K562 (cell line): ENCODE measurements at regions of chr15 and their contacts with region 1.

Region 1: DNA sequence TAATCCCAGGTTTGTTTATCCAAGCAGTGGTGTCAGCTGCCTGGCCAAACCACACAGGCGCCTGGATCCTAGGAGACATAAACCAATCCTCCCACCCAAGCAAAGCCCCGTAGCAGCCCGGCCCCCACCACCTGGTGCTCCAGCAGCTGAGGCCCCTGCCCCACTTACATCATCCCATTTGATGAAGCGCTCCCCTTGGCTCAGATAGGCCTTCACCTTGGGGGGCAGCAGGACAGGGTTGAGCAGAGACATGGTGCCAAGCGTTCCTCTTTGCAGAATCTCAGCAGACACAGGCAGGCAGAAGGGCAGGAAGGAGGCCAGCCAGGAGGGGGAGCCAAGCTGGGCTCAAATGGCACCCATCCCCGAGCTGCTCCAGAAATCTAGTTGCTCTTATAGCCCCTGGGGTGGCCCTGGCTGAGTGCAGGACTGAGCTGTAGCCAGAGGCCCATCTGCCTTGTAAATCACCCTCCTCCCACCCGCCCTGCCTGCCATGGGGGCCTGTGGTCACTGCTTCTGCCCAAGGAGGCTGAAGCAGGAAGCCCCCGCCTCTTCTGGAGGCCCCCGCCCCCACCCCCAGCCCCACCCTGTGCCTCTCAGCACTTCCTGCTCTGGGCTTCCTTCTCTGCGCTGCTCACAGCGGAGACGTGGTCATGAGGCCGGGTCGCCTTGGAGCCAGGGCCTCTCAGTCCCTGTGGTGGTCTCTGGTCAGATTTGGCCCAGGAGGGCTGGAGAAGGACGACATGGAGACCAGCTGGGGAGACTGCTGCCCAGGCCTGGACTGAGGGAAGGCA is at the start of gene PLCB2:
- DNase-seq: peak; percentile 46 to 55 (median 52)
- ATAC-seq: peak; percentile 69
- H3K4me3 ChIP-seq: no peak within 1 kb of the TSS
- H3K27ac ChIP-seq: peak within 1 kb of the TSS; percentile 66
- H3K4me1 ChIP-seq: peaks cover 22 to 36% of the 10 kb centered on the region in 2 experiments
- H3K27me3 ChIP-seq: peaks cover 0 to 13% of the 10 kb centered on the region in 2 experiments; a peak in 2 of 5 replicates
- CTCF ChIP-seq: peak; percentile 39 to 52 (median 40); a peak in 5 of 6 replicates
- EP300 ChIP-seq: no peak
- POLR2A ChIP-seq: no peak
- RAD21 ChIP-seq: peak in 1 of 2 experiments; percentile 6; a peak in 1 of 4 replicates
- polyA plus RNA-seq, gene PLCB2: 0.37 to 0.59 TPM

Region 2: DNA sequence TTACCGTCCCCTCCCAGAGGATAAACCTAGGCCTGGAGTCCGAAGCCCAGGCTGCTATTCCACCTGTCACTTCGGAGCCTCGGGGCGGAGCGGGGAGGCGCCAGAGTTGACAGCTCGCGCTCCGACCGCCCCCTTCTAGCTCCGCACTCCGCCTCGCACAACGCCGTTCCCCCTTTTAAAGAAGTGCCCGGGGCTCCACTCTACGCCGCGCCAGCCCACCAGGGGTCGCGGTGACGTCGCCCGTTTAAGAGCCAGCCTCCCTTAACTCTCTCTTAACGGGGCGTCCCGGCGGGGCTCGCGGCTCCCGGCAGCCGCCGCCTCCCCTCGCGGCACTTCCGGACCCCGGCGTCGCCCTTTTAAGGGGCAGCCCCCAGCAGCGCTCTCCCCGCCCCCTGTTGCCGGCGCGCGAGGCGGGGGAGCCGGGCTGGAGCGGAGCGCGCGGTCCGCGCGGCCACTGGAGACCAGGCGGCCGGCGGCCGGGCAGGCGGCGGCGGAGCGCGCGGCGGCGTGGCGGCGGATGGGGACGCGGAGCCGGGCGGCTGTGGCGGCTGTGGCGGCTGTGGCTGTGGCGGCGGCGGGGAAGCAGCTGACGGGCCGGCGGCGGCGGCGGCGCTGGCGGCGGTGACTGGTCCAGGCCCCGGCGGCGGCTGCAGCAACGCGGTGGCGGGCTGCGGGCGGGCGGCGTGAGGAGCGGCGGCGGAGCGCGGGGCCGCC is 15.8 kb after region 1 on chr15 and contains the start of gene INAFM2:
- CTCF ChIA-PET with region 1: interaction called, 7 read pairs
- POLR2A ChIA-PET with region 1: interaction called, 10 read pairs
- in situ Hi-C with region 1: no loop called
- intact Hi-C with region 1: no loop called
- DNase-seq: peak; percentile 95 to 96 (median 96)
- ATAC-seq: peak; percentile 94
- H3K4me3 ChIP-seq: peak within 1 kb of the TSS; percentile 51
- H3K27ac ChIP-seq: peak within 1 kb of the TSS; percentile 75
- H3K4me1 ChIP-seq: peaks cover 31 to 34% of the 10 kb centered on the region in 2 experiments
- H3K27me3 ChIP-seq: no peaks in the 10 kb centered on the region
- CTCF ChIP-seq: peak; percentile 54 to 64 (median 57)
- EP300 ChIP-seq: no peak; the same call in 1 of the 2 replicates
- POLR2A ChIP-seq: no peak
- RAD21 ChIP-seq: peak; percentile 34 to 47; a peak in 3 of 4 replicates
- polyA plus RNA-seq, gene INAFM2: 11.8 to 12.3 TPM

Region 3: DNA sequence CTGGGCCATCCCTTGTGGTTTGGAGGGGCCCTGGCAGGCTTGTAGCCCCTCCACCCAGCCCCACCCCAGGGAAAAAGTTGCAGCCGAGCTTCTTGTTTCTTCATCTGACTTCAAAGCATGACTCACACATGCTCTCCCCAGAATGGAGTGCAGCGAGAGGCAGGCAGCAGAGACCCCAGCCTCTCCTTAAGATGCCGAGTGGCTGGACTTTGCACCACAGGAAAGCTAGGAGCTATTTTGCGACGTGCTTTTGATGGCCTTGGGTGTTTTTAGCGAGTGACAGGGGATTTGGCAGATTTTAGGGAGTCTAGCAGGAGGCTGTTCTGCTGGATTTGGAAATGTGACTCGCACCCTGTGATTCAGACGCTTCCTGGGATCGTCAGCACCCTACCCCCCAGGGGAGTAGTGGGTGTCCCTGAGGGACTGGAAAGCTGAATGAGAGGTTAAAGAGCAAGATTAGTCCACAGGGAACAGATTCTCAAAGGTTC is 147.3 kb after region 1 on chr15:
- CTCF ChIA-PET with region 1: no interaction called
- POLR2A ChIA-PET with region 1: no interaction called
- in situ Hi-C with region 1: no loop called
- intact Hi-C with region 1: no loop called
- DNase-seq: peak in 2 of 4 experiments; percentile 35 to 47
- ATAC-seq: peak; percentile 36; the same call in 2 of the 3 replicates
- H3K4me3 ChIP-seq: no peak overlapping the region
- H3K27ac ChIP-seq: peak overlapping the region; percentile 50; the same call in 1 of the 3 replicates
- H3K4me1 ChIP-seq: peaks cover 41 to 49% of the 10 kb centered on the region in 2 experiments
- H3K27me3 ChIP-seq: no peaks in the 10 kb centered on the region
- CTCF ChIP-seq: no peak
- EP300 ChIP-seq: no peak
- POLR2A ChIP-seq: no peak
- RAD21 ChIP-seq: no peak